ENCODE measurements at regions of chr15 and their contacts with region 1.

Region 1: DNA sequence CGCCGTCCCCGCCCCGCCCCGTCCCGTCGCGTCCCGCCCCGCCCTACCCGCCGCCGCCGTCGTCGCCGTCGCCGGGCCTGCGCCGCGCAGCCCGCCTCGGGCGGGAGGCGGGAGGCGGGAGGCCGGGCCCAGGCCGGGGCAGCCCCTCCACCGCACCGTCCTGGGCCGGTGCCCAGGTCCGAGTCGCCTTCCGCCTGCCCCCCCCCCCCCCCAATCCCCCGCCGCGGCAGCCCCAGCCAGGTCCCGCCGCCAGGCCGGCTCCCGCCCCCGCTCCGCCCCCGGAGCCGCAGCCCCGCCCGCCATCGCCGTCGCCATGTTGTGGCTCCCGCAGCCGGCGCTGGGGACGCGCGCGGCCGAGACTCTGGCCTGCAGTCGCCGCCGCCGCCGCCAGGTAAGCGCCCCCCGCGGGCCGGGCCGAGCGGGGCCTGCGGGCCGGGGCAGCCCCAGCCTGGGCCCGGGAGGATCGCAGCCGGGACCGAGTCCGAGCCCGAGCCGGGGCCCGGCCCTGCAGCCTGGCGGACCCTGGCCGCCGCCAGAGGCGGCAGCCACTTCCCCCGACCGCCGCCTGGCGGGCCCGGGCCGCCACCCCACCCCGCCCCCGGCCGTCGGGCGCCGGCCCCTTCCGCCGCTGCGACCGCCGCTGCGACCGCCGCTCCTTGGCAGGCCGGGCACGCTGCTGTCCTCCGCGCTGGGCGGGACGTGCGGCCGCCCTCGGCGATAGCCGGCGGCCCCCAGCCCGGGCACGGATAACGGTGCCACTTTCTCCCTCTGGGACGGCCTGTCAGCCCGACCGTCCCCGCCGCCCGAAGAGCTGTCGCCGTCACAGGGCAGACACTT is at the start of gene ZNF592:
- DNase-seq: peak; percentile 77 to 87 (median 81)
- H3K4me3 ChIP-seq: peak within 1 kb of the TSS; percentile 91
- H3K4me3 Mint-ChIP-seq: peak within 1 kb of the TSS; percentile 93 to 100 (median 98)
- H3K27ac ChIP-seq: peak within 1 kb of the TSS; percentile 91
- H3K27ac Mint-ChIP-seq: peak within 1 kb of the TSS; percentile 93 to 100 (median 99)
- H3K4me1 ChIP-seq: peaks cover 52% of the 10 kb centered on the region
- H3K4me1 Mint-ChIP-seq: peaks cover 62 to 75% (median 71%) of the 10 kb centered on the region in 3 donors
- H3K27me3 ChIP-seq: no peaks in the 10 kb centered on the region
- H3K27me3 Mint-ChIP-seq: peaks cover 0 to 3% of the 10 kb centered on the region in 2 donors
- total RNA-seq, gene ZNF592: 31.2 to 33.1 TPM

Region 2: GRCh38 chr15:84725001-84725491 is 23.4 kb before region 1 on chr15:
- CTCF ChIA-PET with region 1: interaction called, 6 read pairs
- POLR2A ChIA-PET with region 1: interaction called, 12 read pairs
- DNase-seq: peak in 2 of 5 donors; percentile 30 to 31
- H3K4me3 ChIP-seq: peak overlapping the region; percentile 57
- H3K4me3 Mint-ChIP-seq: peak overlapping the region; percentile 22 to 86 (median 76)
- H3K27ac ChIP-seq: peak overlapping the region; percentile 40
- H3K27ac Mint-ChIP-seq: peak overlapping the region; percentile 30 to 92 (median 84)
- H3K4me1 ChIP-seq: peaks cover 48% of the 10 kb centered on the region
- H3K4me1 Mint-ChIP-seq: peaks cover 54 to 74% (median 54%) of the 10 kb centered on the region in 3 donors
- H3K27me3 ChIP-seq: no peaks in the 10 kb centered on the region
- H3K27me3 Mint-ChIP-seq: no peaks in the 10 kb centered on the region

Region 3: GRCh38 chr15:84734794-84735479 is 13.6 kb before region 1 on chr15:
- CTCF ChIA-PET with region 1: interaction called, 12 read pairs
- POLR2A ChIA-PET with region 1: interaction called, 68 read pairs
- DNase-seq: peak; percentile 40 to 82 (median 67)
- H3K4me3 ChIP-seq: peak overlapping the region; percentile 49
- H3K4me3 Mint-ChIP-seq: peak overlapping the region; percentile 69 to 93 (median 83)
- H3K27ac ChIP-seq: peak overlapping the region; percentile 57
- H3K27ac Mint-ChIP-seq: peak overlapping the region; percentile 81 to 99 (median 90)
- H3K4me1 ChIP-seq: peaks cover 53% of the 10 kb centered on the region
- H3K4me1 Mint-ChIP-seq: peaks cover 37 to 52% (median 46%) of the 10 kb centered on the region in 3 donors
- H3K27me3 ChIP-seq: no peaks in the 10 kb centered on the region
- H3K27me3 Mint-ChIP-seq: no peaks in the 10 kb centered on the region

Region 4: GRCh38 chr15:84759018-84759417 is 10.5 kb after region 1 on chr15:
- CTCF ChIA-PET with region 1: no interaction called
- POLR2A ChIA-PET with region 1: no interaction called
- DNase-seq: no peak
- H3K4me3 ChIP-seq: no peak overlapping the region
- H3K4me3 Mint-ChIP-seq: peak overlapping the region in 1 of 7 donors; percentile 52
- H3K27ac ChIP-seq: no peak overlapping the region
- H3K27ac Mint-ChIP-seq: peak overlapping the region in 4 of 8 donors; percentile 22 to 69 (median 32)
- H3K4me1 ChIP-seq: peaks cover 58% of the 10 kb centered on the region
- H3K4me1 Mint-ChIP-seq: peaks cover 21 to 29% (median 26%) of the 10 kb centered on the region in 3 donors
- H3K27me3 ChIP-seq: no peaks in the 10 kb centered on the region
- H3K27me3 Mint-ChIP-seq: peaks cover 0 to 1% of the 10 kb centered on the region in 2 donors